HCT116 (cell line): ENCODE measurements at regions of chr6 and their contacts with region 1.

Region 1: DNA sequence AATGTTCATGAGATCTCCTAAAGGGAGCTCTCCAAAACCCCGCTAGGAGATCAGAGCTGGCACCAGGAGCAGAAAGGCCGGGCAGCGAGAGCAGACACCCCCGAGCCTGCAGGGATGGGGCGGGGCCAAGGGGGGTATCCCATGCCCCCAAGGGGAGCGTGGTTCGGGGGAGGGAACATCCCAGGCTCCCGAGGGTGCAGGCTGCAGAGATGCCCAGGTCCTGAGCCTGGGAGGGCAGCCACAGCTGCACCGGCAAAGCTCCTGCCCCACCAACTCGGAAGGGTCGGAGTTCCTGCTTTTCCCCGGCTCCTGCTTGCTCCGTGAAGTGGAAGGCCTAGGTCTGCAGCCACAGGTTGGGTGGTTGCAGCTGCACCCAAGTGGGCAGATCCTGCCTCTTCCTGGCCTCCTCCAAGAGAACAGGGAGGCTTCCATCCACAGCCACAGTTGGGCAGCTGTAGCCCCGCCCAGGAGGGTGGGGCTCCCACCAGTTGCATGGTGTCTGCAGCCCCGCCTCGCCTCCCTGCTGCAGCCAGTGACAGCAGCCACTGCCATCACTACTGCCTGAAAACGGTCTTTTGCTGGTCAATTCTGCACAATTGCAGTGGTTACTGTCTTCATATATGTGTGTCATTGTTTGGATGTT is 13.4 kb upstream of the GMNN start:
- DNase-seq: no peak
- ATAC-seq: peak; percentile 100
- H3K4me3 ChIP-seq: no peak overlapping the region
- H3K27ac ChIP-seq: no peak overlapping the region
- H3K4me1 ChIP-seq: peaks cover 0 to 7% of the 10 kb centered on the region in 2 experiments; a peak in 1 of 4 replicates
- H3K27me3 ChIP-seq: no peaks in the 10 kb centered on the region
- CTCF ChIP-seq: no peak
- POLR2A ChIP-seq: no peak
- RAD21 ChIP-seq: no peak

Region 2: GRCh38 chr6:24699521-24700359 is 61.6 kb before region 1 on chr6:
- CTCF ChIA-PET with region 1: no interaction called
- POLR2A ChIA-PET with region 1: no interaction called
- RAD21 ChIA-PET with region 1: no interaction called
- intact Hi-C with region 1: loop called (anchors 5 kb)
- DNase-seq: no peak
- ATAC-seq: no peak
- H3K4me3 ChIP-seq: no peak overlapping the region
- H3K27ac ChIP-seq: no peak overlapping the region
- H3K4me1 ChIP-seq: no peaks in the 10 kb centered on the region
- H3K27me3 ChIP-seq: no peaks in the 10 kb centered on the region
- CTCF ChIP-seq: no peak
- POLR2A ChIP-seq: no peak
- RAD21 ChIP-seq: no peak